ENCODE measurements at regions of chr2 and their contacts with region 1.

Region 1: DNA sequence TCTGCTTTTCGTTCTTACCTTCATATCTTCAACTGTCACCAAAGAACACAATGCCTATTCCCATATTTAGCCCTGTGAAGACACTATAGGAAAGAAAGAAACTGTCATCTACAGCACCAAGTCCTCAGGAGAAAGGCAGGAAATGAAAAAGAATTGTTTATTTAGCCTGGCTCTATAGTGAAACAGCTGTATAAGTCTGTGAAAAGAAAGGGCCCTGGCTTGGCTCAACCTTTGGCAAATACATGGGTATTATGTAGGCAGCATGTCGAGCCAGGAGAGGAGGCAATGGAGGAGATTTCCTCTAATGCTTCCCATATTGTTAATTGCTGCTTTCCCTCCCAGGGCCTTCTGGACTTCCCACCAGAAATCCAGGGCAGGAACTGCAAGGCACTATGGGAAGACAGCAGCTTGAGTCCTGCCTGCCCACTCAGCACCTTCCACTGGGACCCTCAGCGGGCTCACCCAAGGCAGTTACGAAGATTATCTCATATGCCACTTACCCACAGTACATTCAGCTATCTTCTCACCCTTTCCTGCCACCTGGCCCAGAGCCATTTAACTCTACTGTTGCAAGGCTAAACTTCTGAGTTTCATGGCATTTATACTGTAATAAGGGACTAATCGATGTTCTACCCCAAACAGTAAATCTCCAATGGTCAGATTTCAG is 30.1 kb downstream of the SLC8A1 start:
- DNase-seq: no peak
- H3K4me3 ChIP-seq: no peak overlapping the region
- H3K27ac ChIP-seq: no peak overlapping the region
- H3K4me1 ChIP-seq: no peaks in the 10 kb centered on the region
- H3K27me3 ChIP-seq: no peaks in the 10 kb centered on the region
- CTCF ChIP-seq: no peak
- EP300 ChIP-seq: no peak
- POLR2A ChIP-seq: no peak
- RAD21 ChIP-seq: no peak

Region 2: DNA sequence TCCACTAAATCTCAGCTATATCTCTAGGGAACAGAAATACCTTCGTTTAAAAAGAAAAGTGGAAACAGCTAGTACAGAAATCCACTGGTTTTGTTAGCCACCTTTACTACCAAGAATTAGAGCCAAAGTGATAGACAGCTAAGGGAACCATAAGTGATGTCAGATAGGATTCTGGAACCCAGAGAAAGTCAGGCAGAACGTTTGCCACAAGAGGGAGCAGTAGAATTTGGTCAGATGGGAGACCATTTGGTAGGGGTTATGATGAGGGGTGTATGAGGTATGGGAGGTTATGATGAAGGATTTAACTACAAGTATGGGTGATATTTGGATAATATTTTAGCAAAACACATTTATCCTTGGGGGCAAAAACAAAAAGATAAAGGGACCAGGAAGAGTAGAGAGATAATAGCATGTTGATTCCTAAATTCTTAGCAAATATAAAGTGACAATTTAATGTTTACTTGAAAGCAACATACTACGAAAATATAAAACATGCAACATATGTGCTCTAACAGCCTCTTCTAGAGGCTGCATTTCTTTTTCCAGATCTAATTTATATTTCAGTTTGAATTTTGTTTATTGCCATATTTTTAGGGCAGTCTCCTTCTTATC is 26.8 kb after region 1 on chr2:
- CTCF ChIA-PET with region 1: interaction called, 10 read pairs
- POLR2A ChIA-PET with region 1: no interaction called
- DNase-seq: no peak
- H3K4me3 ChIP-seq: no peak overlapping the region
- H3K27ac ChIP-seq: no peak overlapping the region
- H3K4me1 ChIP-seq: peaks cover 3 to 12% (median 4%) of the 10 kb centered on the region in 4 experiments; a peak in 6 of 7 replicates
- H3K27me3 ChIP-seq: peaks cover 5 to 35% (median 24%) of the 10 kb centered on the region in 4 experiments; a peak in 6 of 7 replicates
- CTCF ChIP-seq: peak in 2 of 3 experiments; percentile 62 to 76; a peak in 3 of 4 replicates
- EP300 ChIP-seq: no peak
- POLR2A ChIP-seq: no peak
- RAD21 ChIP-seq: peak; percentile 61 to 74